PC-9 (cell line): ENCODE measurements at regions of chr19 and their contacts with region 1.

Region 1: GRCh38 chr19:46361915-46362314 is 15.0 kb downstream of the PPP5C start:
- DNase-seq: no peak
- H3K4me3 ChIP-seq: no peak overlapping the region
- H3K27ac ChIP-seq: no peak overlapping the region
- H3K4me1 ChIP-seq: no peaks in the 10 kb centered on the region
- H3K27me3 ChIP-seq: no peaks in the 10 kb centered on the region
- CTCF ChIP-seq: no peak

Region 2: DNA sequence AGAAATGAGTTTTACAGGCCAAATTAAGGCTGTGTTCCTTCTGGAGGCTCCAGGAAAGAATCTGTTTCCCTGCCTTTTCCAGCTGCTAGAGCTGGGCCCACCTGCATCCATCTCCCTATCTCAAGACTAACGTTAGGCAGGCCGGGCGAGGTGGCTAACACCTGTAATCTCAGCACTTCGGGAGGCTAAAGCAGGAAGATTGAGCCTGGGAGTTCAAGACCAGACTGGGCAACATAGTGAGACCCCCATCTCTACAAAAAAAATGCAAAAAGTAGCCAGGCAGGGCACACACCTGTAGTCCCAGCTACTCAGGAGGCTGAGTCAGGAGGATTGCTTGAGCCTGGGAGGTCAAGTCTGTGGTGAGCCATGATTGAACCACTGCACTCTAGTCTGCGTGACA is 50.5 kb before region 1 on chr19:
- CTCF ChIA-PET with region 1: no interaction called
- POLR2A ChIA-PET with region 1: interaction called, 35 read pairs
- intact Hi-C with region 1: no loop called
- DNase-seq: no peak
- H3K4me3 ChIP-seq: no peak overlapping the region
- H3K27ac ChIP-seq: no peak overlapping the region
- H3K4me1 ChIP-seq: no peaks in the 10 kb centered on the region
- H3K27me3 ChIP-seq: no peaks in the 10 kb centered on the region
- CTCF ChIP-seq: no peak

Region 3: GRCh38 chr19:46321653-46322052 is 40.3 kb before region 1 on chr19:
- CTCF ChIA-PET with region 1: no interaction called
- POLR2A ChIA-PET with region 1: no interaction called
- intact Hi-C with region 1: no loop called
- DNase-seq: no peak
- H3K4me3 ChIP-seq: no peak overlapping the region
- H3K27ac ChIP-seq: no peak overlapping the region
- H3K4me1 ChIP-seq: no peaks in the 10 kb centered on the region
- H3K27me3 ChIP-seq: no peaks in the 10 kb centered on the region
- CTCF ChIP-seq: no peak

Region 4: GRCh38 chr19:46339446-46339845 is 22.5 kb before region 1 on chr19:
- CTCF ChIA-PET with region 1: no interaction called
- POLR2A ChIA-PET with region 1: no interaction called
- intact Hi-C with region 1: no loop called
- DNase-seq: no peak
- H3K4me3 ChIP-seq: no peak overlapping the region
- H3K27ac ChIP-seq: no peak overlapping the region
- H3K4me1 ChIP-seq: no peaks in the 10 kb centered on the region
- H3K27me3 ChIP-seq: peaks cover 64% of the 10 kb centered on the region
- CTCF ChIP-seq: no peak

Region 5: GRCh38 chr19:46513461-46514236 is 151.7 kb after region 1 on chr19:
- CTCF ChIA-PET with region 1: no interaction called
- POLR2A ChIA-PET with region 1: no interaction called
- intact Hi-C with region 1: no loop called
- DNase-seq: peak; percentile 51 to 76
- H3K4me3 ChIP-seq: no peak overlapping the region
- H3K27ac ChIP-seq: no peak overlapping the region
- H3K4me1 ChIP-seq: no peaks in the 10 kb centered on the region; the same call in 1 of the 2 replicates
- H3K27me3 ChIP-seq: peaks cover 6% of the 10 kb centered on the region; the same call in 1 of the 2 replicates
- CTCF ChIP-seq: peak; percentile 98